ENCODE measurements at regions of chr4 and their contacts with region 1.

Region 1: GRCh38 chr4:9762823-9763475 is 18.5 kb upstream of the DRD5 start:
- DNase-seq: peak; percentile 36 to 46
- ATAC-seq: peak; percentile 52

Region 2: DNA sequence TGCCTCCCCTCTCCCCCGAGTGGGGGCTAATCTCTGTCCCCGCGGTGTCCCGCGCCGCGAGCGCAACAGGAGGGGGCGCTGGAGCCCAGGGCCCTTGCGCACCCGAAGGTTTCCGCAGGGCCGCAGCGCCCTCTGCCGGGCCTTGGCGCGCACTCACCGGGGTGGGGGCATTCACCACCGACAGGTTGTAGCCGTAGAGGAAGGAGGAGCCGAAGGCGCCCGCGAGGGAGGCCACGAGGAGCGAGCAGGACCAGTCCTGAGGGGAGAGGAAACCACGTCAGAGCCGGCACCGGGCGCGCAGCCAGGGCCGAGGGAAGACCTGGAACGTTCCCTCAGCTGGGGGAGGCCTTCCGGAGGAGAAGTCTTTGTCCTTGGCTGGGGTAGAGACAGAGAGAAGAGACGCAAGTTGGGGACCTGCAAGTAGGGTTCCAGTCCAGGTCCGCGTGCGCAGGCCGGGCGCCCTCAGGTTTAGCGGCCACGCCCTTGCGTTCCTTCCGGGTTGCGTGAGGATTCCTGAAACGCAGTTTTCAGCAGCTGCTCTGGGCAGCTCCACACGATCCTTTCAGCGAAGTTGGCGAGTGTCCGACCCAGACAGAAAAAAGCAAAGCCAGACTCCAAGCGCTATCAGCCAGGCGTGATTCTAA is 256.0 kb after region 1 on chr4:
- intact Hi-C with region 1: loop called (anchors 5 to 10 kb)
- DNase-seq: peak; percentile 96 to 98
- ATAC-seq: peak; percentile 95

Region 3: GRCh38 chr4:10403633-10404445 is 640.9 kb after region 1 on chr4:
- intact Hi-C with region 1: loop called in 1 of 2 experiments (anchors 10 kb)
- DNase-seq: peak in 1 of 2 donors; percentile 16
- ATAC-seq: peak; percentile 76

Region 4: DNA sequence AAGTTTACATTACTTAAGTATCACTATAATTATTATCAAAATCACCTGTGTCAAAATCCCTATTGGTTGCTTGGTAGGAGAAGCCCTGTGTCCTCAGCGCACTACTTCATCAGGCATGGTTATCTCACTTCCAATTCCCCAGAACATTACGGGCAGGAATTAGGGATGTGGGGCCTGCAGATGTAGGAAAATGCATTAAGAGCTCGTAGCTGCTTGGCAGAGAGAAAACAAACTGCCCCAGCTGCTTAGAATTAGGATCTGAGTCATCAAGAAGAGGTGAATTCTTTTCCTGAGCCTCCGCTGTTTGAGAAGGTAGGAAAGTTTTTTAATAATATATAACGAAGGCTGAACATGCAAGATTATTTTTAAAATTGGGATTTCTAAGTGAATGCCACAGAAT is 952.7 kb after region 1 on chr4:
- intact Hi-C with region 1: no loop called
- DNase-seq: no peak
- ATAC-seq: peak; percentile 12